ENCODE measurements at regions of chr11 and their contacts with region 1.

Region 1: GRCh38 chr11:10540923-10541560 is at the start of gene RNF141:
- DNase-seq: peak; percentile 89 to 94 (median 93)
- H3K4me3 ChIP-seq: peak within 1 kb of the TSS; percentile 50 to 77
- H3K4me3 Mint-ChIP-seq: peak within 1 kb of the TSS; percentile 87 to 95 (median 90)
- H3K27ac ChIP-seq: peak within 1 kb of the TSS; percentile 64
- H3K27ac Mint-ChIP-seq: peak within 1 kb of the TSS; percentile 87 to 95 (median 92)
- H3K4me1 ChIP-seq: peaks cover 9% of the 10 kb centered on the region
- H3K4me1 Mint-ChIP-seq: peaks cover 11 to 24% (median 18%) of the 10 kb centered on the region in 4 donors
- H3K27me3 ChIP-seq: no peaks in the 10 kb centered on the region
- H3K27me3 Mint-ChIP-seq: no peaks in the 10 kb centered on the region
- total RNA-seq, gene RNF141: 15.6 to 16.3 TPM

Region 2: GRCh38 chr11:10405855-10406592 is 135.0 kb before region 1 on chr11:
- CTCF ChIA-PET with region 1: interaction called, 14 read pairs
- POLR2A ChIA-PET with region 1: no interaction called
- intact Hi-C with region 1: no loop called
- DNase-seq: peak in 4 of 5 donors; percentile 49 to 54 (median 51)
- H3K4me3 ChIP-seq: no peak overlapping the region
- H3K4me3 Mint-ChIP-seq: no peak overlapping the region
- H3K27ac ChIP-seq: no peak overlapping the region
- H3K27ac Mint-ChIP-seq: peak overlapping the region in 2 of 7 donors; percentile 32 to 58
- H3K4me1 ChIP-seq: peaks cover 17% of the 10 kb centered on the region
- H3K4me1 Mint-ChIP-seq: peaks cover 19 to 51% (median 25%) of the 10 kb centered on the region in 4 donors
- H3K27me3 ChIP-seq: no peaks in the 10 kb centered on the region
- H3K27me3 Mint-ChIP-seq: no peaks in the 10 kb centered on the region

Region 3: DNA sequence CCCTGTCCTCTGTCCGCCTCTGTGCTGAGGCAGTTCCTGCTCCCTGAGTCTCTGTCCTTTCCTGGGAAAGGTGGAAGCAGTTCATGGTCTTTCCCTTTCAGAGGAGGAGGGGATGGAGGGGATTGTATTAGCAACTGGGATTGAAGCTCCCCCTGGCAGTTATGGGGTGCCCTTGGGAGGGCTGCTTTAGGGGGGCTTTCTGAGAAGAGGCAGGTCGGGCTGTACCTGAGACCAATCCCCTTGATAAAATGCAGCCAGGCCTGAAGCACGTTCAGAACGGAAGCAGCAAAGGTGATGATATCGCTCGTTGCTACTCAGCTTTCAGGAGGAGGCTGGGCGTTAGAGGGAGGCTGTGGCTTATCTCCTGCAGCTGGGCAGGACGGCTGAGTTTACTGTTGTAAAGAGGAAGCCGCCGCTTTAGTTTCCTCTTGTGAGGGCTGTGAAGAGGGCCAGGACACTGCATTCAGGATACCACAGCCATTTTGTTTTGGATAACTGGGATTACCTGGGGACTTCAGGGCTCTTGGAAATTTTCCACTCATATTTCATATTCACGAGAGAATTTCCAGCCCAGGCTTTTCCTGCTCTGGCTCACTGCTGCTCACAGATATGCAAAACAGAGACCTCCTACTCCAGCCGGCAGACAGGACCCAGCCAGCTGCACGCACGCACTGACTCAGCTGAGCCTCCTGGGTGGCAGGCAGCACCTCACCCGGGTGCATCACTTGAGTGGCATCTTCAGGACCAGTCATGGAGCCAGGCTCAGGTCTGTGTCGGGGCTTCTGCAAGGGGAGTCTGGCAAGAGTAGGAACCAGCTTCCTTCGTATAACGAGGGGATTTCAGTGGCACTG is 85.2 kb before region 1 on chr11:
- CTCF ChIA-PET with region 1: interaction called, 52 read pairs
- POLR2A ChIA-PET with region 1: interaction called, 43 read pairs
- intact Hi-C with region 1: loop called (anchors 2 kb)
- DNase-seq: peak; percentile 70 to 91 (median 75)
- H3K4me3 ChIP-seq: peak overlapping the region; percentile 53 to 85
- H3K4me3 Mint-ChIP-seq: peak overlapping the region; percentile 90 to 96 (median 93)
- H3K27ac ChIP-seq: peak overlapping the region; percentile 75
- H3K27ac Mint-ChIP-seq: peak overlapping the region; percentile 94 to 97 (median 95)
- H3K4me1 ChIP-seq: peaks cover 84% of the 10 kb centered on the region
- H3K4me1 Mint-ChIP-seq: peaks cover 59 to 97% (median 79%) of the 10 kb centered on the region in 4 donors
- H3K27me3 ChIP-seq: no peaks in the 10 kb centered on the region
- H3K27me3 Mint-ChIP-seq: no peaks in the 10 kb centered on the region

Region 4: GRCh38 chr11:10556590-10556989 is 15.5 kb after region 1 on chr11:
- CTCF ChIA-PET with region 1: interaction called, 10 read pairs
- POLR2A ChIA-PET with region 1: interaction called, 3 read pairs
- intact Hi-C with region 1: no loop called
- DNase-seq: no peak
- H3K4me3 ChIP-seq: no peak overlapping the region
- H3K4me3 Mint-ChIP-seq: no peak overlapping the region
- H3K27ac ChIP-seq: no peak overlapping the region
- H3K27ac Mint-ChIP-seq: no peak overlapping the region
- H3K4me1 ChIP-seq: no peaks in the 10 kb centered on the region
- H3K4me1 Mint-ChIP-seq: peaks cover 0 to 2% (median 0%) of the 10 kb centered on the region in 4 donors
- H3K27me3 ChIP-seq: no peaks in the 10 kb centered on the region
- H3K27me3 Mint-ChIP-seq: peaks cover 9 to 17% of the 10 kb centered on the region in 2 donors

Region 5: DNA sequence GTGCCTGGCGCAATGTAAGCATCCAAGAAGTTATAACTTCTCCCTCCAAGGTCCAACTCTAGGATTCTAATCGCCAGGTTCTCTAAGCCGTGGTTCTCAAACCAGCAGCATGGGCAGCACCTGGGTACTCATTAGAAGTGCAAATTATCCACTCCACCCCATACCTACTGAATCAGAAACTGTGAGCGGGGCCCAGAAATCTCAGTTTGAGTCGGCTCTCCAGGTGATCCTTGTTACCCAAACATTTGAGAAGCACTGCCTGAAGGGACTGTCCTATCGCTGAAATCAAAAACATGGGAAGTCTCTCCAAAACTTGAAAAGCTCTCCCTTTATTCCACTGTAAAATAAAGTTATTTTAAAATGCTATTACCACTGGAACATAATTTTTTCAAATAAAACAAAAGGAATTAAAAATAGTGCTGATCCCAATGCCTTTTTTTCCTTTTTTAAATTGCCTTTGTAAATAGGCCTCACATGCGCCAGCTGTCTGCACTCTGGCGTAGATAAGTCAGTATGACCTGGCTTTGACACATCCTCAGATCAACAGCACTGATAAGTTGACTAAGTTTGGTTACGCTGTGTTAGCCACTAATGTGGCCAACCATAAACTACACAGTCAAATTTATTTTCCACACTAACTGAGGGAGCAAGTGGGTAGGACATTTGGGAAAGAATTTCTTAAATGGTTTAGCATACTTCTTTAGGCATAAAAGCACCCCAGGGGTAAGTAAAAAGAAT is 201.6 kb after region 1 on chr11:
- CTCF ChIA-PET with region 1: interaction called, 4 read pairs
- POLR2A ChIA-PET with region 1: no interaction called
- intact Hi-C with region 1: loop called (anchors 2 kb)
- DNase-seq: peak; percentile 44 to 81 (median 54)
- H3K4me3 ChIP-seq: no peak overlapping the region
- H3K4me3 Mint-ChIP-seq: peak overlapping the region; percentile 16 to 86 (median 72)
- H3K27ac ChIP-seq: peak overlapping the region; percentile 40
- H3K27ac Mint-ChIP-seq: peak overlapping the region; percentile 80 to 93 (median 84)
- H3K4me1 ChIP-seq: peaks cover 41% of the 10 kb centered on the region
- H3K4me1 Mint-ChIP-seq: peaks cover 27 to 58% (median 36%) of the 10 kb centered on the region in 4 donors
- H3K27me3 ChIP-seq: no peaks in the 10 kb centered on the region
- H3K27me3 Mint-ChIP-seq: no peaks in the 10 kb centered on the region

Region 6: GRCh38 chr11:10792398-10792975 is 251.4 kb after region 1 on chr11:
- CTCF ChIA-PET with region 1: no interaction called
- POLR2A ChIA-PET with region 1: no interaction called
- intact Hi-C with region 1: no loop called
- DNase-seq: peak; percentile 71 to 81 (median 72)
- H3K4me3 ChIP-seq: no peak overlapping the region
- H3K4me3 Mint-ChIP-seq: peak overlapping the region in 3 of 8 donors; percentile 0 to 65 (median 58)
- H3K27ac ChIP-seq: no peak overlapping the region
- H3K27ac Mint-ChIP-seq: peak overlapping the region in 1 of 7 donors; percentile 21
- H3K4me1 ChIP-seq: peaks cover 28% of the 10 kb centered on the region
- H3K4me1 Mint-ChIP-seq: peaks cover 21 to 47% (median 33%) of the 10 kb centered on the region in 4 donors
- H3K27me3 ChIP-seq: no peaks in the 10 kb centered on the region
- H3K27me3 Mint-ChIP-seq: peaks cover 1 to 2% of the 10 kb centered on the region in 2 donors

Region 7: DNA sequence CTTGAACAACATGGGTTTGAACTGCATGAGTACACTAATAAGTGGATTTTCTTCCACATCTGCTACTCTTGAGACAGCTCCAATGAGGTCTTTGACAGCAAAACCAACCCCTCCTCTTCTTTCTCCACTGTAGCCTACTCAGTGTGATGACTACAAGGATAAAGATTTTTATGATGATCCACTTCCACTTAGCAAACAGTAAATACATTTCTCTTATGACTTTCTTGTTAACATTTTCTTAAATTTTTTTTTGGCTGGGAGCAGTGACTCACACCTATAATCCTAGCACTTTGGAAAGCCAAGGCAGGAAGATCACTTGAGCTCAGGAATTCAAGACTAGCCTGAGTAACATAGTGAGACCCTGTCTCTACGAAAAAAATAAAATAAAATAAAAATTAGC is 277.6 kb after region 1 on chr11:
- CTCF ChIA-PET with region 1: no interaction called
- POLR2A ChIA-PET with region 1: no interaction called
- intact Hi-C with region 1: no loop called
- DNase-seq: no peak
- H3K4me3 ChIP-seq: no peak overlapping the region
- H3K4me3 Mint-ChIP-seq: no peak overlapping the region
- H3K27ac ChIP-seq: no peak overlapping the region
- H3K27ac Mint-ChIP-seq: no peak overlapping the region
- H3K4me1 ChIP-seq: no peaks in the 10 kb centered on the region
- H3K4me1 Mint-ChIP-seq: no peaks in the 10 kb centered on the region
- H3K27me3 ChIP-seq: no peaks in the 10 kb centered on the region
- H3K27me3 Mint-ChIP-seq: peaks cover 4 to 7% of the 10 kb centered on the region in 2 donors

Measured in CD4-positive, alpha-beta memory T cell (primary cell).